ENCODE measurements at regions of chr3 and their contacts with region 1.

Region 1: GRCh38 chr3:10322352-10322710 is 1.4 kb upstream of the SEC13 start:
- DNase-seq: peak in 2 of 9 experiments; percentile 37 to 47
- ATAC-seq: no peak
- H3K4me3 ChIP-seq: no peak overlapping the region
- H3K4me3 Mint-ChIP-seq: peak overlapping the region; percentile 18
- H3K27ac ChIP-seq: no peak overlapping the region
- H3K27ac Mint-ChIP-seq: no peak overlapping the region
- H3K4me1 ChIP-seq: peaks cover 16% of the 10 kb centered on the region
- H3K4me1 Mint-ChIP-seq: peaks cover 29% of the 10 kb centered on the region
- H3K27me3 ChIP-seq: no peaks in the 10 kb centered on the region
- H3K27me3 Mint-ChIP-seq: peaks cover 3% of the 10 kb centered on the region
- CTCF ChIP-seq: peak; percentile 31

Region 2: GRCh38 chr3:8963137-8963869 is 1359.0 kb before region 1 on chr3 and contains the start of gene RAD18:
- CTCF ChIA-PET with region 1: no interaction called
- POLR2A ChIA-PET with region 1: no interaction called
- intact Hi-C with region 1: loop called in 1 of 2 experiments (anchors 5 kb)
- DNase-seq: peak; percentile 83 to 95 (median 93)
- ATAC-seq: peak; percentile 94
- H3K4me3 ChIP-seq: peak within 1 kb of the TSS; percentile 85 to 89
- H3K4me3 Mint-ChIP-seq: peak within 1 kb of the TSS; percentile 98
- H3K27ac ChIP-seq: peak within 1 kb of the TSS; percentile 87 to 92
- H3K27ac Mint-ChIP-seq: peak within 1 kb of the TSS; percentile 94
- H3K4me1 ChIP-seq: peaks cover 8% of the 10 kb centered on the region
- H3K4me1 Mint-ChIP-seq: peaks cover 35% of the 10 kb centered on the region
- H3K27me3 ChIP-seq: no peaks in the 10 kb centered on the region
- H3K27me3 Mint-ChIP-seq: peaks cover under 1% of the 10 kb centered on the region
- CTCF ChIP-seq: no peak
- total RNA-seq, gene RAD18: 11.7 to 12.1 TPM

Region 3: DNA sequence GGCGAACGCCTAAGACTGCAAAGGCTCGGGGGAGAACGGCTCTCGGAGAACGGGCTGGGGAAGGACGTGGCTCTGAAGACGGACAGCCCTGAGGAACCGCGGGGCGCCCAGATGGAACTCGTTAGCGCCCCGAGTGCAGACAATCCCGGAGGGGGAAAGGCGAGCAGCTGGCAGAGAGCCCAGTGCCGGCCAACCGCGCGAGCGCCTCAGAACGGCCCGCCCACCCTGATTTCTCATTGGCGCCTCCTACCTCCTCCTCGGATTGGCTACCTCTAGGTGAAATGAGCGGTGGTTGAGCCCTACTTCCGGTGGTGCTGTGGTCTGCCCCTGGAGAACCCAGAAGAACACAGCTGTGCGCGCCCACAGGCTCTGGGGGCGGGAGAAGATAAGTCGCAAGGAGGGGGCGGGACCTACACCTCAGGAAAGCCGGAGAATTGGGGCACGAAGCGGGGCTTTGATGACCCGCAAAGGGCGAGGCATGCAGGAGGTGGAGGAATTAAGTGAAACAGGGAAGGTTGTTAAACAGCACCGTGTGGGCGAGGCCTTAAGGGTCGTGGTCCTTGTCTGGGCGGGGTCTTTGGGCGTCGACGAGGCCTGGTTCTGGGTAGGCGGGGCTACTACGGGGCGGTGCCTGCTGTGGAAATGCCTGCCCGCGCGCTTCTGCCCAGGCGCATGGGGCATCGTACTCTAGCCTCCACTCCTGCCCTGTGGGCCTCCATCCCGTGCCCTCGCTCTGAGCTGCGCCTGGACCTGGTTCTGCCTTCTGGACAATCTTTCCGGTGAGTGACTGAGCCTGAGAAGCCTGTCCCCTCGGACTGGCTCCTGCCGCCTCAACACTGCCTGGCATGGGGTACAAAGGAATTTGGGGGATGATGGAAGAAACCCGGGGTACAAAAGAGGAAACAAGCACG is 572.4 kb before region 1 on chr3 and contains the start of gene OGG1:
- CTCF ChIA-PET with region 1: no interaction called
- POLR2A ChIA-PET with region 1: no interaction called
- intact Hi-C with region 1: loop called in 1 of 2 experiments (anchors 2 kb)
- DNase-seq: peak; percentile 84 to 98 (median 95)
- ATAC-seq: peak; percentile 93
- H3K4me3 ChIP-seq: peak within 1 kb of the TSS; percentile 79 to 94
- H3K4me3 Mint-ChIP-seq: peak within 1 kb of the TSS; percentile 96
- H3K27ac ChIP-seq: peak within 1 kb of the TSS; percentile 50 to 52
- H3K27ac Mint-ChIP-seq: peak within 1 kb of the TSS; percentile 93
- H3K4me1 ChIP-seq: peaks cover 35% of the 10 kb centered on the region
- H3K4me1 Mint-ChIP-seq: peaks cover 44% of the 10 kb centered on the region
- H3K27me3 ChIP-seq: no peaks in the 10 kb centered on the region
- H3K27me3 Mint-ChIP-seq: no peaks in the 10 kb centered on the region
- CTCF ChIP-seq: no peak
- total RNA-seq, gene OGG1: 4.9 to 7.9 TPM

Region 4: GRCh38 chr3:9843715-9844438 is 478.5 kb before region 1 on chr3 and contains the start of gene RPUSD3:
- CTCF ChIA-PET with region 1: no interaction called
- POLR2A ChIA-PET with region 1: no interaction called
- intact Hi-C with region 1: loop called in 1 of 2 experiments (anchors 5 kb)
- DNase-seq: peak; percentile 93 to 99 (median 96)
- ATAC-seq: peak; percentile 98
- H3K4me3 ChIP-seq: peak within 1 kb of the TSS; percentile 96 to 99
- H3K4me3 Mint-ChIP-seq: peak within 1 kb of the TSS; percentile 97
- H3K27ac ChIP-seq: peak within 1 kb of the TSS; percentile 64 to 82
- H3K27ac Mint-ChIP-seq: peak within 1 kb of the TSS; percentile 90
- H3K4me1 ChIP-seq: peaks cover 6% of the 10 kb centered on the region
- H3K4me1 Mint-ChIP-seq: peaks cover 26% of the 10 kb centered on the region
- H3K27me3 ChIP-seq: no peaks in the 10 kb centered on the region
- H3K27me3 Mint-ChIP-seq: no peaks in the 10 kb centered on the region
- CTCF ChIP-seq: no peak
- total RNA-seq, gene RPUSD3: 5.3 to 6.4 TPM

Region 5: GRCh38 chr3:9986237-9986725 is 336.1 kb before region 1 on chr3:
- CTCF ChIA-PET with region 1: no interaction called
- POLR2A ChIA-PET with region 1: no interaction called
- intact Hi-C with region 1: loop called (anchors 5 kb)
- DNase-seq: no peak
- ATAC-seq: peak; percentile 46
- H3K4me3 ChIP-seq: peak overlapping the region; percentile 71 to 83
- H3K4me3 Mint-ChIP-seq: peak overlapping the region; percentile 93
- H3K27ac ChIP-seq: peak overlapping the region; percentile 83 to 93
- H3K27ac Mint-ChIP-seq: peak overlapping the region; percentile 96
- H3K4me1 ChIP-seq: peaks cover 24% of the 10 kb centered on the region
- H3K4me1 Mint-ChIP-seq: peaks cover 39% of the 10 kb centered on the region
- H3K27me3 ChIP-seq: no peaks in the 10 kb centered on the region
- H3K27me3 Mint-ChIP-seq: no peaks in the 10 kb centered on the region
- CTCF ChIP-seq: no peak

Region 6: GRCh38 chr3:10437272-10437994 is 115.1 kb after region 1 on chr3:
- CTCF ChIA-PET with region 1: no interaction called
- POLR2A ChIA-PET with region 1: interaction called, 9 read pairs
- intact Hi-C with region 1: loop called in 1 of 2 experiments (anchors 5 kb)
- DNase-seq: peak; percentile 29 to 85 (median 60)
- ATAC-seq: peak; percentile 92
- H3K4me3 ChIP-seq: no peak overlapping the region
- H3K4me3 Mint-ChIP-seq: peak overlapping the region; percentile 33
- H3K27ac ChIP-seq: peak overlapping the region in 1 of 2 experiments; percentile 53
- H3K27ac Mint-ChIP-seq: peak overlapping the region; percentile 75
- H3K4me1 ChIP-seq: peaks cover 20% of the 10 kb centered on the region
- H3K4me1 Mint-ChIP-seq: peaks cover 34% of the 10 kb centered on the region
- H3K27me3 ChIP-seq: no peaks in the 10 kb centered on the region
- H3K27me3 Mint-ChIP-seq: no peaks in the 10 kb centered on the region
- CTCF ChIP-seq: no peak

Measured in CD8-positive, alpha-beta T cell (primary cell).